Natural killer cell (primary cell): ENCODE measurements at regions of chr10 and their contacts with region 1.

Region 1: GRCh38 chr10:45000752-45001380 is at the start of gene ZNF22:
- DNase-seq: peak; percentile 65 to 83
- ATAC-seq: peak; percentile 75 to 87 (median 76)
- H3K4me3 ChIP-seq: peak within 1 kb of the TSS; percentile 42
- H3K4me3 Mint-ChIP-seq: peak within 1 kb of the TSS; percentile 92
- H3K27ac ChIP-seq: peak within 1 kb of the TSS; percentile 76
- H3K27ac Mint-ChIP-seq: peak within 1 kb of the TSS; percentile 81 to 88
- H3K4me1 ChIP-seq: peaks cover 22% of the 10 kb centered on the region
- H3K4me1 Mint-ChIP-seq: peaks cover 58 to 61% of the 10 kb centered on the region in 2 donors
- H3K27me3 ChIP-seq: no peaks in the 10 kb centered on the region
- H3K27me3 Mint-ChIP-seq: no peaks in the 10 kb centered on the region
- CTCF ChIP-seq: no peak
- total RNA-seq, gene ZNF22: 24.2 to 31.8 (median 25.0) TPM

Region 2: DNA sequence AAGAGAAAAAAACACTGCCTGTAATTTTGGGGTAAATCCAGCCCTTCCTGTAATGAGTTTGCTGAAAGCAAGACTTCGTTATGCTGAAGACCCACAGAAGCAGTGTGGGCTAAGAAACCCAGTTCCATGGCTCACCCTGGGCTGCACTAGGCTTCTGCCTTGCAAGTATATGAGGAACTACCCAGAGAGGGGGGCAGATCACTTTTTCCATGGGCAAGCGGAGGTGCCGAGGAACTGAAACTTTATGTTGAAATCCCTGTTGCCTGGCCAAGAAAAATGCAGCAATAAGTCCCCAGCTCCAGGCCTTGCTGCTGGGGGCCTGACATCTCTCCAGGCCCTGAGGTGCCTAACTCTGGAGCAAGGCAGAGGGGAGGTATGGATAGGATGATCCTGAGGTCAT is 32.8 kb before region 1 on chr10:
- intact Hi-C with region 1: loop called (anchors 2 kb)
- DNase-seq: no peak
- ATAC-seq: peak; percentile 3 to 36 (median 20)
- H3K4me3 ChIP-seq: no peak overlapping the region
- H3K4me3 Mint-ChIP-seq: peak overlapping the region; percentile 74
- H3K27ac ChIP-seq: peak overlapping the region; percentile 44
- H3K27ac Mint-ChIP-seq: peak overlapping the region; percentile 75 to 92
- H3K4me1 ChIP-seq: peaks cover 92% of the 10 kb centered on the region
- H3K4me1 Mint-ChIP-seq: peaks cover 65 to 93% of the 10 kb centered on the region in 2 donors
- H3K27me3 ChIP-seq: no peaks in the 10 kb centered on the region
- H3K27me3 Mint-ChIP-seq: no peaks in the 10 kb centered on the region
- CTCF ChIP-seq: no peak

Region 3: DNA sequence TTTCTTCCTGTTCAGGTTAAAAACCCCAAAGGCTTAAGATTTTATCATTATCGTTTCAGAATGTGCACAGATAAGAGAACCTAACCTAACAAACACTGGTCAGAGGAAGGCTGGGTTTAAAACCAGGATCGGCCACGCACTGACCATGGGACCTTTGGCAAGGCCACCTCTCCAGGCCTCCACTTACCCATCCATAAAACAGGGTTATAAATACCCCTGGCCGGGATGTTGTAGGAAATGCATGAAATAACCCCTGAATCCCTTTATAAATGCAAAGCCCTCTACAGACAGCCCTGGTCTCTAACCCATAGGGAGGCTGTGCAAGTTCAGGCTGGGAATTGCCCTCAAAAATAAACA is 22.7 kb before region 1 on chr10:
- intact Hi-C with region 1: no loop called
- DNase-seq: no peak
- ATAC-seq: no peak
- H3K4me3 ChIP-seq: no peak overlapping the region
- H3K4me3 Mint-ChIP-seq: no peak overlapping the region
- H3K27ac ChIP-seq: no peak overlapping the region
- H3K27ac Mint-ChIP-seq: no peak overlapping the region
- H3K4me1 ChIP-seq: peaks cover 20% of the 10 kb centered on the region
- H3K4me1 Mint-ChIP-seq: peaks cover 20 to 21% of the 10 kb centered on the region in 2 donors
- H3K27me3 ChIP-seq: no peaks in the 10 kb centered on the region
- H3K27me3 Mint-ChIP-seq: no peaks in the 10 kb centered on the region
- CTCF ChIP-seq: no peak

Region 4: GRCh38 chr10:45076891-45077290 is 76.0 kb after region 1 on chr10:
- intact Hi-C with region 1: loop called (anchors 5 kb)
- DNase-seq: peak; percentile 26 to 43
- ATAC-seq: peak; percentile 88 to 100 (median 98)
- H3K4me3 ChIP-seq: no peak overlapping the region
- H3K4me3 Mint-ChIP-seq: peak overlapping the region; percentile 88
- H3K27ac ChIP-seq: peak overlapping the region; percentile 73
- H3K27ac Mint-ChIP-seq: peak overlapping the region; percentile 88 to 93
- H3K4me1 ChIP-seq: peaks cover 7% of the 10 kb centered on the region
- H3K4me1 Mint-ChIP-seq: peaks cover 47 to 52% of the 10 kb centered on the region in 2 donors
- H3K27me3 ChIP-seq: no peaks in the 10 kb centered on the region
- H3K27me3 Mint-ChIP-seq: no peaks in the 10 kb centered on the region
- CTCF ChIP-seq: no peak